ENCODE measurements at regions of chr11 and their contacts with region 1.

Region 1: GRCh38 chr11:66113116-66113854 is 43.2 kb downstream of the PACS1 start:
- DNase-seq: no peak
- H3K4me3 Mint-ChIP-seq: peak overlapping the region; percentile 31
- H3K27ac Mint-ChIP-seq: peak overlapping the region; percentile 74
- H3K4me1 Mint-ChIP-seq: peaks cover 82% of the 10 kb centered on the region
- H3K27me3 Mint-ChIP-seq: no peaks in the 10 kb centered on the region

Region 2: GRCh38 chr11:66051766-66052663 is 61.3 kb before region 1 on chr11 and contains the start of gene SF3B2:
- CTCF ChIA-PET with region 1: interaction called, 3 read pairs
- POLR2A ChIA-PET with region 1: interaction called, 13 read pairs
- DNase-seq: peak; percentile 98
- H3K4me3 Mint-ChIP-seq: peak within 1 kb of the TSS; percentile 100
- H3K27ac Mint-ChIP-seq: peak within 1 kb of the TSS; percentile 96
- H3K4me1 Mint-ChIP-seq: peaks cover 37% of the 10 kb centered on the region
- H3K27me3 Mint-ChIP-seq: peaks cover 2% of the 10 kb centered on the region
- total RNA-seq, gene SF3B2: 230 to 241 TPM

Region 3: GRCh38 chr11:66081505-66081904 is 31.8 kb before region 1 on chr11:
- CTCF ChIA-PET with region 1: interaction called, 15 read pairs
- POLR2A ChIA-PET with region 1: interaction called, 44 read pairs
- DNase-seq: peak; percentile 87
- H3K4me3 Mint-ChIP-seq: peak overlapping the region; percentile 83
- H3K27ac Mint-ChIP-seq: peak overlapping the region; percentile 100
- H3K4me1 Mint-ChIP-seq: peaks cover 65% of the 10 kb centered on the region
- H3K27me3 Mint-ChIP-seq: no peaks in the 10 kb centered on the region

Region 4: DNA sequence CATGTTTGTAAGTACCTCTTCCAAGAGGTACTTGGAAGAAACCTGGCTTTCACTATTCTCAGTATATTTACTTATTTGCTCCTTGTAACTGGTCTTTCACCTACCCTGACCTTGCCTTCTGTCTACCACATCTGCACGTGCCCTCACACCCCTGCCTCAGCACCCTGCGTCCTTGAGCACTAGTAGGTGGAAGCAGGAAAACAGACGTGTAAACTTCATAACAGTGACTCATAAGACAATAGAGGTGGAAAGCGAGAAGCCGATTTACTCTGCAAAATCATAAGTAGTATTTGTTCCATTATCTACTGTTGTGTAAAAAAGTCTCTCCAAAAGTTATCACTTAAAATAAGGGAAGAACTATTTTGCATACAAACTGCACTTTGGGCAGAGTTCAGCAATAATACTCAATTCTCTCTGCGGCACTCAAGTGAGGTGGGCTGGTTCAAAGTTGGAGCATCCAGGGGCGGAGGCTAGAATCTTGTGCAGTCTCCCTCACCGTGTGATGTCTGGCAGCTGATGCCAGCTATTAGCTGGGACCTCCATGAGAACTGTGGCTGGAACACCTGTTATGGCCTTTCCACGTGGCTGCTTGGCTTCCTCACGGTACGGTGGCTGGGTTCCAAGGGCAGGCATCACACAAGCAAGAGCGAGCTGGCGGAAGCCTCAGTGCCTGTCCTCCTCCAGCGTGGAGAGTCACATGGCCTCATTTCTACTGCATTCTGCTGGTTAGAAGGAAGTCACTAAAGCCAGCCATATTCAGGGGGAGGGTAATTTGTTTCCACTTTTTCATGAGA is 12.8 kb before region 1 on chr11:
- CTCF ChIA-PET with region 1: interaction called, 9 read pairs
- POLR2A ChIA-PET with region 1: interaction called, 25 read pairs
- DNase-seq: peak; percentile 76
- H3K4me3 Mint-ChIP-seq: peak overlapping the region; percentile 60
- H3K27ac Mint-ChIP-seq: peak overlapping the region; percentile 87
- H3K4me1 Mint-ChIP-seq: peaks cover 39% of the 10 kb centered on the region
- H3K27me3 Mint-ChIP-seq: no peaks in the 10 kb centered on the region

Region 5: GRCh38 chr11:66126808-66127555 is 13.7 kb after region 1 on chr11:
- CTCF ChIA-PET with region 1: interaction called, 15 read pairs
- POLR2A ChIA-PET with region 1: interaction called, 21 read pairs
- DNase-seq: peak; percentile 62
- H3K4me3 Mint-ChIP-seq: peak overlapping the region; percentile 35
- H3K27ac Mint-ChIP-seq: peak overlapping the region; percentile 82
- H3K4me1 Mint-ChIP-seq: peaks cover 52% of the 10 kb centered on the region
- H3K27me3 Mint-ChIP-seq: no peaks in the 10 kb centered on the region

Region 6: GRCh38 chr11:66480117-66480938 is 367.0 kb after region 1 on chr11 and contains the start of gene DPP3:
- CTCF ChIA-PET with region 1: no interaction called
- POLR2A ChIA-PET with region 1: no interaction called
- DNase-seq: peak; percentile 97
- H3K4me3 Mint-ChIP-seq: peak within 1 kb of the TSS; percentile 78
- H3K27ac Mint-ChIP-seq: peak within 1 kb of the TSS; percentile 86
- H3K4me1 Mint-ChIP-seq: peaks cover 27% of the 10 kb centered on the region
- H3K27me3 Mint-ChIP-seq: no peaks in the 10 kb centered on the region
- total RNA-seq, gene DPP3: 59.3 to 60.6 TPM